ENCODE measurements at regions of chr12 and their contacts with region 1.

Region 1: DNA sequence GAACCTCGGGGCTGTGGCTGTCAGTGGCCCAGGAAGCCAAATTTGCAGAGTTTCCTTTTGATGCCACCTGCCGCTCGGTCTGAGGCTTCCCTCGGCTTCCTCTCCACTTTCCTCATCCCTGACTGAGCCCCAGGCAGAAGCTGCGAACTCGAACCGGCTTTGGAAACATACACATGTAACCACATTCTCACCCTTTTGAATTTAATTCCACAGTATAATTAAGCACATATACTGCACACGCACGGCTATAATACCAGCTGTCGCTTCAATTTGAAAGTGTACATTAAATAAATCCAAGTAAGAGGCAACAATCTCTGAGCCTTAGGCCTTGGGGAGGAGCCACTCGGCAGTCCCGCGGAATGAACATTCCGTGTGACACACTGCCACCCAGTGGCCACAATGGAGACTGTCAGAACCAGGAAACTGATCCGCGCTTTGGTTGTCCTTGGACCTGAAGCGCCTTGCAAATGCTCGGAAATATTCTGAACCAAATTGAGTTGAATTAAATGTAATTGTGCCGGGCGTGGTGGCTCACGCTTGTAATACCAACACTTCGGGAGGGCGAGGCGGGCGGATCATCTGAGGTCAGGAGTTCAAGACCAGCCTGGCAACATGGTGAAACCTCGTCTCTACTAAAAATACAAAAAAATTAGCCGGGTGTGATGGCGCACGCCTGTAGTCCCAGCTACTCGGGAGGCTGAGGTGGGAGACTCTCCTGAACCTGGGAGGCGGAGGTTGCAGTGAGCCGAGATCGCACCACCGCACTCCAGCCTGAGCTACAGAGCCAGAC is 117.9 kb upstream of the TMPO start:
- H3K4me3 Mint-ChIP-seq: peak overlapping the region; percentile 63
- H3K27ac Mint-ChIP-seq: no peak overlapping the region
- H3K4me1 Mint-ChIP-seq: peaks cover 32% of the 10 kb centered on the region
- H3K27me3 Mint-ChIP-seq: no peaks in the 10 kb centered on the region

Region 2: DNA sequence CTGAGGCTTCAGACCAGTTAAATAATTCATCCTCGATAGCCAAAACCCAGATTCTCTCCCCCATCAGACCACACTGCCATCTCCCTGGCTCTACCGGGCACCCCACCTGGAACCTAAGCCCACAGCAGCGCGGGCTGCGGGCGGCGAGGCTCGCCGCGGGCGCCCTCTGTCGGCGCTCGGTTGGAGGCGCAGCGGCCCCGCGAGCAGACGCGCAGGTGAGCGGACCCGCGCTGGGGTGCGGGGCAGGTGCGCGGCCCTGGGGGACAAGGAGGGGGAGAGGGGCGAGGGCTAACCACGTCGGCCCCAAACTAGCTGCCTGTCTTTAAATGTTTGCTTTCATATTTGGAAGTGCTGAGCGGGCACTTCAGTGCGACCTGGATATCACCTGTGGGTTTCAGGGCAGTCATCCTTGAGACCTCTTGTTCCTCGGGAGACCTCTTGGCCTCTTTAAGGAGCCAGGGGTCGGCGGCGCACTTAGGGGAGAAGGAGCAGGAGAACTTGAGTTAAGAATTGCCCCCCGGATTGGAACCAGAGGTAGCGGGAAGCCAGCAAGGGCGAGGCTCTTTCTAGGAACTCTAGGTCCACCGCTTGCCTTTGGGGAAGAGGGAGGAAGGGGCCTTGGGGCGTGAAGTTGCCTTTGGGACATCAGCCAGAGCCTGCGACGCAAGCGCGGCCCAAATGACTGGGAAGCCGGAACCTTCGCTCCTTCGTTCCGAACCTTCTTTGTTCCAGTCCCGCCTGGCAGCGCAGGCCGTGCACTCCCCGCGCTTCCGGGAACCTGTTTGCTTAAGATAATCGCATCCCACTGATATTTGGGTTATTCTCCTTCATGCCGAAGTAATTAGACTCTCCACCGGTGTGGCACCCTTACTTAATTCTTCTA is 1411.8 kb before region 1 on chr12:
- intact Hi-C with region 1: loop called (anchors 10 kb)
- H3K4me3 Mint-ChIP-seq: peak overlapping the region; percentile 30
- H3K27ac Mint-ChIP-seq: no peak overlapping the region
- H3K4me1 Mint-ChIP-seq: peaks cover 10% of the 10 kb centered on the region
- H3K27me3 Mint-ChIP-seq: peaks cover 19% of the 10 kb centered on the region

Region 3: DNA sequence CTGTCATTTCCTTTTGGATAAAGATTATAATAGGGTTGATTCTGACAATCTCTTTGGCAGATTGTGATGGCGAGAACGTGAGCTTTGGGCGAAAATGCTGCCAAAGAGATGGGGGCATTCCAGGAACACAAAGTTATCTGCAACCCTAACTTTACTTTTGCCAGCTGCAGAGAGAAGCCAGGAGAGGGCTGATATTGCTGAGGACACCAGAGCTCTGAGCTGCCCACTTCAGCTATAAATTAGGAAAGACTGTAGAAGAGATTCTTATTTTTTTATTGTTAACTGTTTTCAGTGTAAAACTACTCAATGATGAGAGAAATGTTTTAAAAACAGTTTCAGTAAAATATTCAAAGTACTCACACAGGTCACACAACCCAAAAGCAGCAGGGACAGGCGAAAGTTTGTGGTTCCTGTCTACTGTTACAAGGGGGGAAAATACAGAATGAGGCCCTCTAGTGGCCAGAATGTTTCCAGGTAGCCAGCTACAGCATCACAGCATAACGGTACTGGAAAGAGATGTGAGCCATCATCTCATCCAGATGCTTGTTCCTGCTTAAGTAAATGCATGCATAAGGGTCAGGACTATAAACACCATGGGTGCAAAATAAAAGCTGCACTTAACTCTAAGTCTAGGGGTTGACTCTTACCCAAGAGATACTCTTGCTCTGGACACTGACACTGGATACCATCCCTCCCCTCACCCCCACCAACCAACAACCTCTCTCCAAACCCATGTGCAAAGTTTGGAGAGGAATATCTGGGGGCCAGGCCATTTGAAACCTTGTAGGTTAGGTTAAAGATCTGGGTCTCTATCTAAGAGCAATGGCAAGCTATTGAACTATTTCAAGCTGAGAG is 436.5 kb before region 1 on chr12:
- intact Hi-C with region 1: loop called (anchors 5 kb)
- H3K4me3 Mint-ChIP-seq: no peak overlapping the region
- H3K27ac Mint-ChIP-seq: no peak overlapping the region
- H3K4me1 Mint-ChIP-seq: no peaks in the 10 kb centered on the region
- H3K27me3 Mint-ChIP-seq: no peaks in the 10 kb centered on the region

Region 4: DNA sequence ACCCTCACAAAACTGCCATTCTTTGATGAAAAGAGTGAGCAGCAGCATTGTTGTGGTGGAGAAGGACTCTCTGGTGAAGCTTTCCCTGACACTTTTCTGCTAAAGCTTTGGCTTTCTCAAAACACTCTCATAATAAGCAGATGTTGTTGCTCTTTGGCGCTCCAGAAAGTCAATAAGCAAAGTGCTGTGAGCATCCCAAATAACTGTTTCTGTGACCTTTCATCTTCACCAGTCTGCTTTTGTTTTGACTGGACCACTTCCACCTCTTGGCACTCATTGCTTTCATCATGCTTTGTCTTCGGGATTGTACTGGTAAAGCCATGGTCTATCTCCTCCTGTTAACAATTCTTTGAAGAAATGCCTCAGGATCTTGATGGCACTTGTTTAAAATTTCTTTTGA is 306.8 kb before region 1 on chr12:
- intact Hi-C with region 1: no loop called
- H3K4me3 Mint-ChIP-seq: no peak overlapping the region
- H3K27ac Mint-ChIP-seq: no peak overlapping the region
- H3K4me1 Mint-ChIP-seq: no peaks in the 10 kb centered on the region
- H3K27me3 Mint-ChIP-seq: no peaks in the 10 kb centered on the region

Region 5: GRCh38 chr12:98227162-98227561 is 170.3 kb before region 1 on chr12:
- intact Hi-C with region 1: loop called (anchors 1 kb)
- H3K4me3 Mint-ChIP-seq: no peak overlapping the region
- H3K27ac Mint-ChIP-seq: no peak overlapping the region
- H3K4me1 Mint-ChIP-seq: no peaks in the 10 kb centered on the region
- H3K27me3 Mint-ChIP-seq: peaks cover 2% of the 10 kb centered on the region

Region 6: GRCh38 chr12:98578821-98579220 is 181.3 kb after region 1 on chr12:
- intact Hi-C with region 1: no loop called
- H3K4me3 Mint-ChIP-seq: no peak overlapping the region
- H3K27ac Mint-ChIP-seq: no peak overlapping the region
- H3K4me1 Mint-ChIP-seq: no peaks in the 10 kb centered on the region
- H3K27me3 Mint-ChIP-seq: no peaks in the 10 kb centered on the region